CD4-positive, alpha-beta T cell (primary cell): ENCODE measurements at regions of chr13 and their contacts with region 1.

Region 1: DNA sequence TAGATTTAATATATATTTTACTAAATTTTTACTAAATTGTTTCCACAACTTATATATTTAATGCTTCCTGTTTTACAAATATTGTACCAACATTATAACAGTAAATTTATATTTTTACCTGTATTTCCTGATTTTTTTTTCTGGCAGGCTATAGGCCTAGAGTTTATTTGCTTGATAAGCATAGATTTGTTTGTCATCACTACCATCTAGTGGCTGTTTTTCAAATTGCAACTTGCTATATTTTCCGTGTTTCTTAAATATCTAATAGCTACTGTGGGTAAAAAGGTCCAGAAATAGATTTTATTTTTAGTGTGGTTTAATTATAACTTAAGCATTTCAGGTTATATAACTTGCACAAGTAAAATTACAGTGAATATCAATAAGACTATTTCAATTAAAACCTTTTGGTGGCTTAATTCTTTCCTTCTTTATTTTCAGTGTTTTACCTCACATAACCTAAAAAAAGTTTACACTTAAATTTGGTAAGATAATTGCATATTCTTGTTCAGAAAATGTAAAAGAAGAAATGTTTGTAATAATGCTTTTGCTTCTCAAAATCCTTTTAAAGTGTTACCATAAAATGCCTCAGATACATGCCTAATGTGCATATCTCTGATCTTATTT is 60.6 kb downstream of the NDFIP2 start:
- DNase-seq: peak in 3 of 14 experiments; percentile 73 to 82 (median 80)
- ATAC-seq: peak; percentile 63
- H3K4me3 ChIP-seq: no peak overlapping the region
- H3K4me3 Mint-ChIP-seq: no peak overlapping the region
- H3K27ac ChIP-seq: no peak overlapping the region
- H3K27ac Mint-ChIP-seq: no peak overlapping the region
- H3K4me1 ChIP-seq: no peaks in the 10 kb centered on the region
- H3K4me1 Mint-ChIP-seq: no peaks in the 10 kb centered on the region
- H3K27me3 ChIP-seq: no peaks in the 10 kb centered on the region
- H3K27me3 Mint-ChIP-seq: no peaks in the 10 kb centered on the region
- CTCF ChIP-seq: peak; percentile 97

Region 2: DNA sequence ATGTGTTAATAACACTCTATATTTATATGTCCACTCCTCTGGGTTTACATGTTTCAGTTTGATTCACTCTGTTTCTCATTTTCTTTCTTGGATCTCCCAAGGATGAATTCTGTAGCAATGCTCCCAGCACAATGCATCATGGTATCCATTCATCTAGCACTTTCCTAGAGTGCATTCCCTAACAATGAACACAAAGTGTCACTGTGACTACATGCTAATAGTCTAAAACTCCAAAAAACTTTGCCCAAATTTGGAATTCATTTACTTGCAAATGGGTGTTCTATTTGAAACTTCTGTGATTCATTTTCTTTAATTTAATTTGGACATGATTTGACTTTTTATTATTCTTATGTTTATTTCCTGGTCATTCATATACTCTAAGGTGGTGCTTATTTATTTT is 1224.5 kb before region 1 on chr13:
- CTCF ChIA-PET with region 1: no interaction called
- POLR2A ChIA-PET with region 1: no interaction called
- intact Hi-C with region 1: loop called in 1 of 2 experiments (anchors 5 kb)
- DNase-seq: no peak
- ATAC-seq: no peak
- H3K4me3 ChIP-seq: no peak overlapping the region
- H3K4me3 Mint-ChIP-seq: no peak overlapping the region
- H3K27ac ChIP-seq: no peak overlapping the region
- H3K27ac Mint-ChIP-seq: no peak overlapping the region
- H3K4me1 ChIP-seq: no peaks in the 10 kb centered on the region
- H3K4me1 Mint-ChIP-seq: no peaks in the 10 kb centered on the region
- H3K27me3 ChIP-seq: no peaks in the 10 kb centered on the region
- H3K27me3 Mint-ChIP-seq: peaks cover 12% of the 10 kb centered on the region
- CTCF ChIP-seq: no peak